GM12878 (cell line): ENCODE measurements at regions of chr14 and their contacts with region 1.

Region 1: DNA sequence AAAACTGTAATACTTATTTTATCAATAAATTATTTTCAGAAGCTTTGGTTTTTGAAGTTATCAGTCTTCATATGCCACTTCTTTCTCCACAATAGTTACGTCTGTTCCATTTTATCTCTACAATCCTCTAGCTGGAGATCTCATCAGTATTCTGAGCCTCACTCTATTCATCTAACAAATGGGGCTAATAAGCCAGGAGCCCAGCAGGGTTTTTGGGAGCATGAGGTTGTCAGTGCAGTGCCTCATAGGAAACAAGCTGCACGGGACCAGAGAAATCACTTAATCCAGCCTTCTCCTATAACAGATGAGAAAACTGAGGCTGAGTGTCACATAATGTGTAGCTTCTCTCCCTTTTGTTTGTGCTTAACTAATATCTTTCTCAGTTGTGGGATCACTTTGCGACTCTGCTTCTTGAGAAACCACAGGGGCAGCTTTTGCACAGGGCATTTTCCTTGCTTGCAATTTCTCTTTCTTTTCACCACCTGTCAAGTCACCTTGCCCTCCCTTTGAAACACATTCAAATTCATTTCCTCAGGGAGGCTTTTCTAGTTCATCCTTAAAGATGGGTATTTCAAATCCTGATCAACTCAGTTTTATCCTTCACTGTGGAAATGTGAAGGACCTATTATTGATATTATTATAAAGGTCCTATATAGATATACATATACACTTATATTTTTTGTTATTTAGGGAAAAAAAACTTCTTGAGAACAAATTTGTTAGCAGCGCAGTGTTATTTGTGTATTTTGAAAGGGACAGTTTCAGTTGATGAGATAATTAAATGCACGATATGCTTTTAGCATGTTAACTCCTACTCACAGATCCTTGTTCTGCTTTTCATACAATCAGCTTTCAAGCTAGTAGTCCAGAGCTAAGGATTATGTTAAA is 501.7 kb upstream of the RGS6 start:
- DNase-seq: peak; percentile 73
- ATAC-seq: peak; percentile 82
- H3K4me3 ChIP-seq: peak overlapping the region; percentile 58; the same call in 1 of the 2 replicates
- H3K27ac ChIP-seq: peak overlapping the region; percentile 84
- H3K4me1 ChIP-seq: peaks cover 33% of the 10 kb centered on the region
- H3K27me3 ChIP-seq: no peaks in the 10 kb centered on the region
- CTCF ChIP-seq: no peak
- EP300 ChIP-seq: peak; percentile 47 to 60; a peak in 3 of 4 replicates
- POLR2A ChIP-seq: no peak
- RAD21 ChIP-seq: 0 out of 2 replicates have a peak, but pooled peaks have one; percentile 6

Region 2: DNA sequence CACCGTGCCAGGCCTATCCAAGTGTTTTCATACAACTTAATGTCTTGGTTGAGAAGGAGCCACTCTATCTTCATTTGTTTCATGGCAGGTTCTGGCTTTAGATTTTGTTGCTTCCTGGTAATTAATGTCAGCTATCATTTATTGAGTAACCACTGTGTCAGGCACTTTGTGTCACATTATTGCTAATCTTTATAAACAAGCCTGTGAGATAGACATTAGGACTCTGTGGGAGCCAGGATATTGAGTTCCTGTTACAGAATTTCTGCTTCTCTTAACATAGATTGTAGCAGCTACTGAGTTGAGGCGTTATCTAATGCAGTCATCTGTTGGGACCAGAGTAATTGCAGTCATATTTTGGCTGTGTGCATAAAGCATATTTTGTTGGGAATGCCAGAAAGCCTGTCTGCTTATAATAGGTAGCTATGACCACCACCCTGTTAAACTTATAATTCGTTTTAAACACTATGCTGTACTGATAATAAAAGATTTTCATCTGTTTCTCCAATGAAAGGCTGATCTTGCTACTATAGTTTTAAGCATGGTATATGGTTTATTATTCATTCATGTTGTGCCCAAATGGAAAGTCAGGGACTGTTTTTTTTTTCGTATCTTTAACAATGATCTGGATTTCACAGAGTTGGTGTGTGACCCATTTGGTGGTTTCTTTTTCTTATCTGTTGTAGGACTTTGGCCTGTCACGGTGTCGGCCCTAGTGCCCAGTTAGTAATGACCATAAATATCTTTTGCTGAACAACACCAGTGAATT is 90.7 kb before region 1 on chr14:
- CTCF ChIA-PET with region 1: no interaction called
- POLR2A ChIA-PET with region 1: no interaction called
- RAD21 ChIA-PET with region 1: no interaction called
- SMC1A ChIA-PET with region 1: no interaction called
- in situ Hi-C with region 1: no loop called
- intact Hi-C with region 1: no loop called
- DNase-seq: no peak
- ATAC-seq: no peak
- H3K4me3 ChIP-seq: no peak overlapping the region
- H3K27ac ChIP-seq: no peak overlapping the region
- H3K4me1 ChIP-seq: no peaks in the 10 kb centered on the region
- H3K27me3 ChIP-seq: no peaks in the 10 kb centered on the region
- CTCF ChIP-seq: no peak
- EP300 ChIP-seq: no peak
- POLR2A ChIP-seq: no peak
- RAD21 ChIP-seq: no peak

Region 3: GRCh38 chr14:71355324-71356201 is 75.0 kb before region 1 on chr14:
- CTCF ChIA-PET with region 1: no interaction called
- POLR2A ChIA-PET with region 1: no interaction called
- RAD21 ChIA-PET with region 1: interaction called, 4 read pairs
- SMC1A ChIA-PET with region 1: interaction called, 15 read pairs
- in situ Hi-C with region 1: no loop called
- intact Hi-C with region 1: no loop called
- DNase-seq: no peak
- ATAC-seq: peak; percentile 45
- H3K4me3 ChIP-seq: peak overlapping the region; percentile 20; the same call in 1 of the 2 replicates
- H3K27ac ChIP-seq: peak overlapping the region; percentile 52
- H3K4me1 ChIP-seq: peaks cover 38% of the 10 kb centered on the region
- H3K27me3 ChIP-seq: no peaks in the 10 kb centered on the region
- CTCF ChIP-seq: no peak
- EP300 ChIP-seq: no peak
- POLR2A ChIP-seq: no peak
- RAD21 ChIP-seq: no peak

Region 4: GRCh38 chr14:71415404-71415690 is 15.2 kb before region 1 on chr14:
- CTCF ChIA-PET with region 1: interaction called, 6 read pairs
- POLR2A ChIA-PET with region 1: interaction called, 5 read pairs
- RAD21 ChIA-PET with region 1: interaction called, 11 read pairs
- SMC1A ChIA-PET with region 1: interaction called, 14 read pairs
- in situ Hi-C with region 1: no loop called
- intact Hi-C with region 1: no loop called
- DNase-seq: no peak
- ATAC-seq: no peak
- H3K4me3 ChIP-seq: no peak overlapping the region
- H3K27ac ChIP-seq: no peak overlapping the region
- H3K4me1 ChIP-seq: no peaks in the 10 kb centered on the region; the same call in 1 of the 2 replicates
- H3K27me3 ChIP-seq: no peaks in the 10 kb centered on the region
- CTCF ChIP-seq: no peak
- EP300 ChIP-seq: no peak
- POLR2A ChIP-seq: no peak
- RAD21 ChIP-seq: no peak

Region 5: DNA sequence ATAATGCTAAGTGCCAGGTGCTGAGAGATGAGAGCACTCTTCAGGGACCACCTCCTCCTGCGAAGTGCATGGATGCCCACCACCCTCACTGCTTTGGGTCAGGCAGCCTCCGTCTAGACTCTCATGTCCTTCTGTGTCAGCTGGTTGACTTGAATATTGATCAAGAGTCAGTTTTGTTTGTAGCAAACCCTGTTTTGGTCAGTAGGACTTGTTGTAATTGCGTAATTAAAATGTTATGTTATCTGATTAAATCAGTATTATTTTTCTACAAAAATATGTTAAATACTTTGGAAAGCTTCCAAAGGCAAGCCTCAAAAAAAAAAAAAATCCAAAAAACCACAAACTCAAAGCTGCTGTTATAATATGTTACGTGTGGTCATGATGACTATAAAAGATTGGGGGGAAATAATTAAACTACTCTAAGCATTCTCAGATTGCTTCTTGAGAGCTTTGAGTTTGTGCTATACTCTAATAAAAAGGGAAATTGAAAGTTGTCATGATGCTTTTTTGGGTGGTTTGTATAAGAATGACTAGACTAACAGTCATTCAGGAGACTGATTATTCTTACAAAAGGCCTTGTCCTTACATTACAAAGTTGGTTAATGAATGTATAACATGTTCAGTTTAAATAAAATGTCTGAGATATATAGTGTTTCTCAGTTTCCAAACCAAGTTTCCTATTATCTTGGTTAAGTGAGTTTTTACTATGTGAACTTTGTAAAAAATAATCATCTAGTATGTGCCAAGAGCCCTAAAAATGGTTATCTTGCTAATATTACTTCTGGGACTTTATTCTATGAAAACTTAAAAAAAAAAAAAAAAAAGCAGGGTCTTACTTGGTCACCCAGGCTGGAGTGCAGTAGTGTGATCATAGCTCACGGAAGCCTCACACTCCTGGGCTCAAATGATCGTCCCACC is 41.7 kb after region 1 on chr14:
- CTCF ChIA-PET with region 1: interaction called, 3 read pairs
- POLR2A ChIA-PET with region 1: interaction called, 10 read pairs
- RAD21 ChIA-PET with region 1: interaction called, 26 read pairs
- SMC1A ChIA-PET with region 1: interaction called, 36 read pairs
- in situ Hi-C with region 1: no loop called
- intact Hi-C with region 1: no loop called
- DNase-seq: no peak
- ATAC-seq: peak; percentile 84
- H3K4me3 ChIP-seq: no peak overlapping the region
- H3K27ac ChIP-seq: peak overlapping the region; percentile 69
- H3K4me1 ChIP-seq: peaks cover 35% of the 10 kb centered on the region
- H3K27me3 ChIP-seq: no peaks in the 10 kb centered on the region
- CTCF ChIP-seq: no peak
- EP300 ChIP-seq: 0 out of 4 replicates have a peak, but pooled peaks of 1 of the 2 experiments have one; percentile 1
- POLR2A ChIP-seq: no peak
- RAD21 ChIP-seq: no peak

Region 6: DNA sequence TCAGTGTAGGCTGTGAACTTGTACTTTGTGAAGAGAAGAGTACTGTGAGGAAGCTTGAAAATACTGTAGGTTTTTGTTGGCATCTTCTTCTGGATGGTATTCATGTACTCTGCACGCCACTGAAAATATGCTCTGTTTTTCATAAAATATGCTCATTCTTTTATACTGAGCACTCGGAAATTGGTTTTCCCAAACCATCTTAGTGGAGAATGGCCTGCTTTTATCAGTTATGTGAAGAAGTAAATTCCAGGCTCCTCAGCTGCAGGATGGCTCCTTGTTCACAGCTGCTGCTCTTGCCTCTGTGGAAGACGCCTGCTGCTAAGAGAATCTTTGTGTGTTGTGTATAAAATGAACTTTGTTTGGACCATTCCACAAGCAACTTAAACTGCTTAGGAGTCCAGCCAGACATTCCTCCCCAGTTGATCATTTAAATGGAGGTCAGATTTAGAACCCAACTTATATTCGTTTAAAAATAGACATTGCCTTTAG is 58.2 kb after region 1 on chr14:
- CTCF ChIA-PET with region 1: interaction called, 6 read pairs
- POLR2A ChIA-PET with region 1: interaction called, 5 read pairs
- RAD21 ChIA-PET with region 1: interaction called, 9 read pairs
- SMC1A ChIA-PET with region 1: interaction called, 22 read pairs
- in situ Hi-C with region 1: no loop called
- intact Hi-C with region 1: no loop called
- DNase-seq: no peak
- ATAC-seq: no peak
- H3K4me3 ChIP-seq: no peak overlapping the region
- H3K27ac ChIP-seq: no peak overlapping the region
- H3K4me1 ChIP-seq: peaks cover 11% of the 10 kb centered on the region
- H3K27me3 ChIP-seq: no peaks in the 10 kb centered on the region
- CTCF ChIP-seq: no peak
- EP300 ChIP-seq: no peak
- POLR2A ChIP-seq: no peak
- RAD21 ChIP-seq: no peak

Region 7: DNA sequence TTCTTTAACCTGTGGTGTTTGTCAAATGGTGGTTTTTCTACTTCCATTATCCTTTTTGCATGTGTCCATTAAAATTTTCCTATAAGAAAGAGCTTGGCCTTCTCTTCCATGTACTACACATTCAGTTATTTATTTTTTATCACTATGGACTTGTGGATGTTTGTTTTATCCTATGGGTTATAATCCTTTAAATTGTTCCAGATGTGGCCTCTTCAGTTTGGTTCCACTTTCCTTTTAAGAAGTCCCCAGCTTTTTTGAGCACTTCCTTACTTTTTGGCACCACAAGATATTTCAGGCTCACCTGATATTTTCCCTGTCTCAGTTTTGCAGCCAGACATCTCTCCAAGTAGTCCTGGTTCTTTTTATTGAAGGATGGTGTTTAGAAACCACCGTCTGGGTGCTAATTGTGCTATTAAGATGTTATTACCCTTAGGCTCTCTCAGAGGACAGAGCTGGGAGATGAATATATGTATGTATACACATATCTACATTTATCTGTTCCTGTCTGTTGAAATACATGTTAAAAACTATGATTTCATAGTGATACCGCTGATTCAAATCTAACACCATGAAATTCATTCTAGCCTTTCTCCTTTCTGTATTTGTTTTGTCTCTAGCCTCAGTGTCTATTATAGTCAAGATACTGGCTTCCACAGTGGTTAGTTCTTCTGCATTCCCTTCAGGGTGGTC is 93.2 kb after region 1 on chr14:
- CTCF ChIA-PET with region 1: interaction called, 3 read pairs
- POLR2A ChIA-PET with region 1: no interaction called
- RAD21 ChIA-PET with region 1: interaction called, 6 read pairs
- SMC1A ChIA-PET with region 1: interaction called, 10 read pairs
- in situ Hi-C with region 1: no loop called
- intact Hi-C with region 1: no loop called
- DNase-seq: peak; percentile 76
- ATAC-seq: peak; percentile 91
- H3K4me3 ChIP-seq: peak overlapping the region; percentile 22; the same call in 1 of the 2 replicates
- H3K27ac ChIP-seq: peak overlapping the region; percentile 72
- H3K4me1 ChIP-seq: peaks cover 26% of the 10 kb centered on the region
- H3K27me3 ChIP-seq: no peaks in the 10 kb centered on the region
- CTCF ChIP-seq: no peak
- EP300 ChIP-seq: peak; percentile 82 to 95
- POLR2A ChIP-seq: no peak
- RAD21 ChIP-seq: no peak